ENCODE measurements at regions of chr17 and their contacts with region 1.

Region 1: GRCh38 chr17:75154195-75155106 is at the start of gene JPT1:
- DNase-seq: peak; percentile 96 to 99 (median 98)
- H3K4me3 ChIP-seq: peak within 1 kb of the TSS; percentile 92
- H3K27ac ChIP-seq: peak within 1 kb of the TSS in 1 of 2 donors; percentile 16
- H3K4me1 ChIP-seq: peaks cover 1% of the 10 kb centered on the region
- H3K27me3 ChIP-seq: no peaks in the 10 kb centered on the region
- CTCF ChIP-seq: peak in 1 of 3 donors; percentile 44
- EP300 ChIP-seq: no peak
- POLR2A ChIP-seq: peak; percentile 99
- total RNA-seq, gene JPT1: 12.9 to 46.4 (median 20.2) TPM

Region 2: GRCh38 chr17:76547184-76547641 is 1392.8 kb after region 1 on chr17:
- intact Hi-C with region 1: loop called in 1 of 4 experiments (anchors 5 kb)
- DNase-seq: peak; percentile 62 to 84 (median 70)
- H3K4me3 ChIP-seq: no peak overlapping the region
- H3K27ac ChIP-seq: no peak overlapping the region
- H3K4me1 ChIP-seq: peaks cover 34% of the 10 kb centered on the region
- H3K27me3 ChIP-seq: no peaks in the 10 kb centered on the region
- CTCF ChIP-seq: peak; percentile 50 to 84 (median 79)
- EP300 ChIP-seq: no peak
- POLR2A ChIP-seq: no peak